Left cardiac atrium (tissue), 4 donors: ENCODE measurements at regions of chr14 and their contacts with region 1.

Region 1: GRCh38 chr14:22418631-22419030 is 170.4 kb downstream of the DAD1 start:
- DNase-seq: no peak
- ATAC-seq: no peak

Region 2: GRCh38 chr14:21680072-21680471 is 738.6 kb before region 1 on chr14:
- intact Hi-C with region 1: no loop called
- DNase-seq: no peak
- ATAC-seq: no peak

Region 3: DNA sequence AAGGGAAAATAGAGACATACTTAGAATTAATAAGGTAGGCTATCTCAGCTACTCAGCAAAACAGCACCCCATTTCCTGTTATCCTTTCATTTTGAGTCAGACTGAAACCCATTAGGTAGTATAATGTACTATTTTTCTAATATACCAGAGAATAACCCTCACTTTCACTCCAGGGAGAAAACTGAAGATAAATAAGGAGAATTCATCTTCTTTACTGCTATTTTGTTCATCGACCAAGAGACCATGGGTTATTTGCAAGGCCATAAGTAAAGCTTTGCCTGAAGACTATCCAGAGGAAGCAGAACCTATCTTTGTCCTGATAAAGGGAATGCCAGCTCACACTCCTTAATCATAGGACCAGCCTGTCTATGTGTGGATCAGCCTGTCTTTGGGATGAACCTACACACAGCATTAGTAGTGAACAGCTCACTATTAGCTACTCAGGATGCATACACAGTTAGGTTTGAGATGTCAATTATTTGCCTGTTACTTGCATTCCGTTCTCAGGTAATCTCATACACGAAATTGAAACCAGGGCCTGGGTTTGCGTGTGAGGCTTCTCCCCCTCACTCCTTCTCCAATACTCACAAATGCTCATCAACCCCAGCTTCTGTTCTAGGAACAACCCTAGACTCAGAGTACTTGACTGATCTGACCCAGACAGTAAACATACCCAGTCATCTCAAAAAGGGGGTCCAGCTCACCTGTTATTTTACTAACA is 46.0 kb after region 1 on chr14:
- intact Hi-C with region 1: loop called in 1 of 2 experiments (anchors 5 kb)
- DNase-seq: no peak
- ATAC-seq: no peak